ENCODE measurements at regions of chr6 and their contacts with region 1.

Region 1: DNA sequence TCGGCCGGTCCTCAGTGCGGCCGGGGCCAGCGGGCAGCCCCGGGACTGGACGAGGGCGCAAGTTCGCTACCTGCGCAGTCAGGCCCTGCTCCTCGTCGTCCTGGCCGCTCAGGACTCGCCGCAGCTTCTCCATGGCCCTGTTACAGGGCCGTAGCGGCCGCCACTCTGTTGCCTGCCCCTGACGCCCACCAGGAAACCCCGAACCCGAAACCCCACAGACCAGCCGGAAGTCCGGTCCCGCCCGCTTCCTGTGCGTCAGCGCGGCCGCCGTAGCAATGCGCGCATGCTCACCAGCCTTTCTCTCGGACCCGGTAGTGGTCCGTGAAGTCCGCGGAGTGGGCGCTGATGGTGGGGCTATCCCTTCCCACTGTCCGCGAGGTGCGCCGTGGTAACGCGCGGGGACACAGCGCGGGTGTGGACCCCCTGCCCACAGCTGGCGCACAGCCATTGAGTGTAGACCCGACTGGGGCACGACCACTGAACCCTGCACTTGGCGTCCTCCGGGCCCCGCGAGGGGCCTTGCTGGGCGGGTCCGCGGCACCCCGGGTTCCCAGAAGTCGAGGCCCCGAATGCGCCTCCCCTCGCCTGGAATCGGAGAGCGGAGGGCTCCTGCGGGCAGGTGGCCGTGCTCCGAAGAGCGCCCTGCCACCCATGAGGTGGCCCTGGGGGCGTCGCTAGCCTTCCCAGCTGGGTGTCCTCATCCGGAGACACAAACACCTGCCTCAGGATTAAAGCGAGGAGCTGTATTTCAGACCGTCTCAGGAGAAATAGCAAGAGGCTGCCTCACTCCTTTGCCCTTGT is at the start of gene SFT2D1:
- DNase-seq: peak; percentile 90 to 95 (median 92)
- ATAC-seq: peak; percentile 93 to 99 (median 98)
- H3K4me3 ChIP-seq: peak within 1 kb of the TSS; percentile 67 to 99 (median 96)
- H3K27ac ChIP-seq: peak within 1 kb of the TSS; percentile 54 to 99 (median 91)
- H3K4me1 ChIP-seq: peaks cover 0 to 54% (median 33%) of the 10 kb centered on the region in 12 donors
- H3K27me3 ChIP-seq: no peaks in the 10 kb centered on the region
- CTCF ChIP-seq: no peak
- POLR2A ChIP-seq: peak; percentile 51 to 88
- total RNA-seq, gene SFT2D1: 16.8 to 30.8 (median 20.9) TPM

Region 2: DNA sequence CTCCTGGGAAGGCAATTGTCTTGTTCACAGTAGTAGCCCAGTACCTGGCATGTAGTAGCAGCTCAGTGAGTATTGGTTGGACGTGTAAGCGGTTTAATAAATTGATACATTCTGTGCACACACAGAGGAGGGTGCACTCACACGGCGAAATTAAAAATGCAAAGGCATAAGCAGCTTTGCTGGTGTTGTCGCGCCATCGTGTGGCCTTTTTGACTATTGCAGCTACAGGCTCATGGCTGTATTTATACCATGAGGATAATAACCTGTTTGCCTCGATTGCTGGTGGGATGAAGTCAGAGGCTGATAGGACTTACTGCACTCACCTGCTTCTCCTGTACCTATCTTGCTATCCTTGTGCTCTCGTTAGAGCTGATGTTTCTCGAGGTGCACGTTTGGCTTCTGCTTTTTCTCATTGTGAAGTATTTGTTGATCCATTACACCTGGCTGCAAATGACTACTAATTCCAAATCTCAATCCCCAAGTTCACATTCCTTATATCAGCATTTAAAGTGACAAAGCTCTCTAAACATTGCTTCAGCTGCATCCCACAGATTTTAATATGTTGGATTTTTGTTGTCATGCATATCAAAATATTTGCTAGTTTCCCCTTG is 236.4 kb before region 1 on chr6:
- intact Hi-C with region 1: no loop called
- DNase-seq: peak; percentile 45 to 78 (median 64)
- ATAC-seq: peak in 3 of 4 donors; percentile 60 to 86 (median 73)
- H3K4me3 ChIP-seq: no peak overlapping the region
- H3K27ac ChIP-seq: no peak overlapping the region
- H3K4me1 ChIP-seq: no peaks in the 10 kb centered on the region
- H3K27me3 ChIP-seq: peaks cover 0 to 16% (median 5%) of the 10 kb centered on the region in 9 donors
- CTCF ChIP-seq: peak; percentile 77 to 93 (median 84)
- POLR2A ChIP-seq: no peak

Region 3: DNA sequence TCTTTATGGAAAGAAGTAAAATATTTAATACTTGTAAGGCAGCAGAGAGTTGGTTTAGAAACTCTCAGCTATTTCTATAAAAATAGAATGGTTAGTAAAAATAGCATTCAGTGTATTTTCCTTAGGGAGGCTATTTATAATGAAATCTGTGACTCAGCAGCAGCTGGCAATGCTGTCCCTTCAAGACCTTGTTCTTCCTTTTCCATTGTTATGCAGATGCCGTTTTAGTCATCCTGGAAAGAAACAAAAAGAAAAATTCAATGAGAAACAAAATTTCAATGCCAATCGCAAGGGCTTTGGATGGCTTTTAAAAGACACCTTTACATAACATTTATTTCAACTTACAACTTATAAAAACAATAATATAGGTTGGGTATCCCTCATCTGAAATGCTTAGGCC is 22.7 kb after region 1 on chr6:
- intact Hi-C with region 1: loop called in 1 of 10 experiments (anchors 2 kb)
- DNase-seq: peak in 2 of 5 donors; percentile 39 to 46
- ATAC-seq: peak; percentile 41 to 74 (median 66)
- H3K4me3 ChIP-seq: peak overlapping the region in 4 of 12 donors; percentile 4 to 27 (median 14)
- H3K27ac ChIP-seq: peak overlapping the region; percentile 56 to 93 (median 79)
- H3K4me1 ChIP-seq: peaks cover 3 to 79% (median 53%) of the 10 kb centered on the region in 12 donors
- H3K27me3 ChIP-seq: no peaks in the 10 kb centered on the region
- CTCF ChIP-seq: no peak
- POLR2A ChIP-seq: no peak